Posterior vena cava (tissue), 2 donors: ENCODE measurements at regions of chr19 and their contacts with region 1.

Region 1: GRCh38 chr19:49937750-49938381 is 8.6 kb upstream of the NUP62 start:
- DNase-seq: peak; percentile 95

Region 2: GRCh38 chr19:49983645-49984229 is 45.9 kb after region 1 on chr19:
- intact Hi-C with region 1: loop called (anchors 5 kb)
- DNase-seq: peak; percentile 87